Activated T-helper 1 cell treated with anti-CD3 and anti-CD28 coated beads, Interleukin-12 subunit alpha, Interleukin-12 subunit beta, Interleukin-2, Interleukin-4 antibody, amounts not matched to agents 30 ng/mL and 10 ng/mL and 1 ng/mL, durations not matched to agents 14 hours and 24 hours and 36 hours (primary cell): ENCODE measurements at regions of chr13 and their contacts with region 1.

Region 1: GRCh38 chr13:98842864-98843481 is 90.5 kb upstream of the SLC15A1 start:
- DNase-seq: peak; percentile 44
- H3K4me3 Mint-ChIP-seq: no peak overlapping the region
- H3K27ac Mint-ChIP-seq: no peak overlapping the region
- H3K4me1 Mint-ChIP-seq: peaks cover 13% of the 10 kb centered on the region
- H3K27me3 Mint-ChIP-seq: no peaks in the 10 kb centered on the region

Region 2: GRCh38 chr13:97855570-97856303 is 987.2 kb before region 1 on chr13:
- intact Hi-C with region 1: loop called (anchors 2 kb)
- DNase-seq: no peak
- H3K4me3 Mint-ChIP-seq: no peak overlapping the region
- H3K27ac Mint-ChIP-seq: no peak overlapping the region
- H3K4me1 Mint-ChIP-seq: no peaks in the 10 kb centered on the region
- H3K27me3 Mint-ChIP-seq: peaks cover 6% of the 10 kb centered on the region

Region 3: GRCh38 chr13:98445340-98446233 is 397.4 kb before region 1 on chr13:
- intact Hi-C with region 1: loop called (anchors 1 kb)
- DNase-seq: peak; percentile 62
- H3K4me3 Mint-ChIP-seq: no peak overlapping the region
- H3K27ac Mint-ChIP-seq: peak overlapping the region; percentile 58
- H3K4me1 Mint-ChIP-seq: peaks cover 8% of the 10 kb centered on the region
- H3K27me3 Mint-ChIP-seq: no peaks in the 10 kb centered on the region

Region 4: GRCh38 chr13:98653463-98653985 is 189.4 kb before region 1 on chr13:
- intact Hi-C with region 1: loop called (anchors 2 kb)
- DNase-seq: peak; percentile 52
- H3K4me3 Mint-ChIP-seq: no peak overlapping the region
- H3K27ac Mint-ChIP-seq: no peak overlapping the region
- H3K4me1 Mint-ChIP-seq: peaks cover 4% of the 10 kb centered on the region
- H3K27me3 Mint-ChIP-seq: peaks cover 5% of the 10 kb centered on the region

Region 5: DNA sequence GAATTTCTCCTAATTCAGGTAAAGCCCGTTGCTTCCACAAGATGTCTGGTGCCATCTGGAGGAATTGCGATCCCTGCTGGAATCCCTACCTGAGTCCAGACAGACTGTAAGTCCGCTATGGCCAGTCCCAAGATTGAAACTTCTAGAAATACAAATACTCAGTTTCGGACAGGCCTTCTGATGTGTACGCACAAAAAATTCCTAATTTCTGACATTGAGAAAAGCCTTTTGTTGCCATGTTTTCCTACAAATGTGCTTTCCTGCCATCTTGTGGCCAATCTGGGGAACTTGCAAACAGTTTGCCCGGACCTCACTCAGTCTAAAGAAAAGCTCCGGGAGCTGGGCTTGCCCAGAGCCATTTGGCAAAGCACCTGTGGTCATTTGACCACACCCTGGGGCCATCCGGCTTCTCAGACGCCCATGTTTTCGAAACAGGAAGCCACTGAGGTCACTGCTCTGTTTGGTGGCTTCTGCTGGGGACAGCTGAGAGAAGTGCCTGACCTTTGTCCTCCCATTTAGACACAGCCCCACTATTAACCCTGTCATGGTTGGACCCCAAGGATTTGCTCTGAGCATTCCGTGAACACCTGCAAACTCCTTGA is 169.9 kb before region 1 on chr13:
- intact Hi-C with region 1: loop called (anchors 2 kb)
- DNase-seq: peak; percentile 32
- H3K4me3 Mint-ChIP-seq: no peak overlapping the region
- H3K27ac Mint-ChIP-seq: no peak overlapping the region
- H3K4me1 Mint-ChIP-seq: no peaks in the 10 kb centered on the region
- H3K27me3 Mint-ChIP-seq: peaks cover 16% of the 10 kb centered on the region

Region 6: GRCh38 chr13:98798849-98799645 is 43.9 kb before region 1 on chr13:
- intact Hi-C with region 1: no loop called
- DNase-seq: no peak
- H3K4me3 Mint-ChIP-seq: no peak overlapping the region
- H3K27ac Mint-ChIP-seq: no peak overlapping the region
- H3K4me1 Mint-ChIP-seq: peaks cover 7% of the 10 kb centered on the region
- H3K27me3 Mint-ChIP-seq: no peaks in the 10 kb centered on the region

Region 7: DNA sequence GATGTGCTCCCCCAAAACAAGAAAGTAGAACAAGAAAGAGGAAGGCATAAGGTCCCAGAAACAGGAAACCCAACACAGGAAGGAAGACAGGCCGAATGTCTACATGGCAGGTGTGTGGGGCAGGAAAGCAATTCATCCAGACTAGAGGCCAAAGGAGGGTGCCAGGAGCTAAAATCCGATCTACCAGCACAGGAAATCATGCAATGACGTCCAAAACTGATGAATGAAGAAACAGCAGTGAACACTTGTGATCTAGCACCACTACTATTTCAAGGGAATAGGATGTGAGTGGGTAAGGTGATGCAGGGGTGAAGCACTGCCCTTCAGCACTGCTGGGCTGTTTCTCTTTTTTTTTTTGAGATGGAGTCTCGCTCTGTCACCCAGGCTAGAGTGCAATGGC is 75.8 kb after region 1 on chr13:
- intact Hi-C with region 1: no loop called
- DNase-seq: no peak
- H3K4me3 Mint-ChIP-seq: no peak overlapping the region
- H3K27ac Mint-ChIP-seq: peak overlapping the region; percentile 76
- H3K4me1 Mint-ChIP-seq: peaks cover 40% of the 10 kb centered on the region
- H3K27me3 Mint-ChIP-seq: no peaks in the 10 kb centered on the region

Region 8: DNA sequence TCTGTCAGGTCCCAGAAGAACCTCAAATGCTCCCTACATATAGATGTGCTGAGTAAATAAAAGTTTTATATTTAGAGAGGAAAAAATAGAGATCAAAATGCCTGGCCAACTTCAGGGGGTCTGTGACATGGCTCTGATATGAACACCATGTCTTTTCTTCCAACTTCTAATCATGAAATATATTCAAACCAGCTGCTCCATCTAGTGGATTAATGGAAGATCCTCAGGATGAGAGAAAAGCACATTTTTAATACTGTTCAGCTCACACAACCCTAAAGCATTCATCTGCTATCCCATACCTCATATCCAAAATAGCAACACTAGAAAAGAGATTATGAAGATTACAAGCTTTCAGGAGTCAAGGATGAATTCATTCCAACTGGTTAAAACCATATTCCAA is 190.8 kb after region 1 on chr13:
- intact Hi-C with region 1: loop called (anchors 1 kb)
- DNase-seq: no peak
- H3K4me3 Mint-ChIP-seq: no peak overlapping the region
- H3K27ac Mint-ChIP-seq: no peak overlapping the region
- H3K4me1 Mint-ChIP-seq: peaks cover 23% of the 10 kb centered on the region
- H3K27me3 Mint-ChIP-seq: no peaks in the 10 kb centered on the region